Activated CD4-positive, alpha-beta memory T cell treated with anti-CD3 and anti-CD28 coated beads, Interleukin-2, amount 10 ng/mL, durations not matched to agents 7 days and 5 days (primary cell): ENCODE measurements at regions of chr7 and their contacts with region 1.

Region 1: GRCh38 chr7:135662373-135663114 is at the start of gene STMP1:
- DNase-seq: peak; percentile 96
- H3K4me3 Mint-ChIP-seq: peak within 1 kb of the TSS; percentile 85
- H3K27ac Mint-ChIP-seq: peak within 1 kb of the TSS; percentile 69
- H3K4me1 Mint-ChIP-seq: peaks cover 37% of the 10 kb centered on the region
- H3K27me3 Mint-ChIP-seq: no peaks in the 10 kb centered on the region
- total RNA-seq, gene STMP1: 19.7 to 20.5 TPM

Region 2: DNA sequence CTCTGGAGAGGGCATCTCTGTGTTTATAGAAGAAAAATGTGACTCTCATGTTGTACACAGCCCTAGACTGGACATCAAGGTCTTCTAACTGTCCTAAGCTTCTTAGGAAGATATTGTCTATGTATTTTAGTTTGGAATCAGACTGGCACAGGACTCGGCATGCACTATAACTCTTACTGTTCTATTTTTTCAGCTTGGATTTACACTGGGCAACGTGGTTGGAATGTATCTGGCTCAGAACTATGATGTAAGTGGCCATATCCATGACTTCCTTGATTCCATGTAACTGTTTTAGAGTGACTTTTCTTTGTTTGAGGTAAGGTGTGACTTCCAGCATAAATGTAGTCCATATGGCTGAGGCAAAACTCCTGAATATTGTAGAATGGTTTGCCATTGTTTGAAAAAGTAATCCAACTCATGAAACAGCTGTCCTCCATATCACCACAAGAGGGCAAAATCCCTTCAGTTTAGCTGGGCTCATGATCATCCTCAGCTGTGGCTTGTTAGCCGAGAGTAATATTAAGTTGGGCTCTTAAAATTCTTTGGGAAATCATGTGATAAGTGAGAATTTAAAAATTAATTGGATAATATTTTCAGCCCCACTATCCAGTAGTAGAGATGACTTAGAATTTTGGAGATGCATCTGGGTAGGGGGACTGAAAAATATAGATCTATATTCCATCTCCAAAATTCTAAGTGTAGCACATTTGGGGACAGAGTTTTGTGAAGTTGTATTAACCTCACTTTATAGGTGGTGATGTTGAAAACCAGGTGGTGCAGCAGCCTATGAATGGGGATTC is 10.2 kb after region 1 on chr7:
- CTCF ChIA-PET with region 1: interaction called, 16 read pairs
- POLR2A ChIA-PET with region 1: interaction called, 45 read pairs
- DNase-seq: no peak
- H3K4me3 Mint-ChIP-seq: no peak overlapping the region
- H3K27ac Mint-ChIP-seq: no peak overlapping the region
- H3K4me1 Mint-ChIP-seq: peaks cover 3% of the 10 kb centered on the region
- H3K27me3 Mint-ChIP-seq: no peaks in the 10 kb centered on the region

Region 3: DNA sequence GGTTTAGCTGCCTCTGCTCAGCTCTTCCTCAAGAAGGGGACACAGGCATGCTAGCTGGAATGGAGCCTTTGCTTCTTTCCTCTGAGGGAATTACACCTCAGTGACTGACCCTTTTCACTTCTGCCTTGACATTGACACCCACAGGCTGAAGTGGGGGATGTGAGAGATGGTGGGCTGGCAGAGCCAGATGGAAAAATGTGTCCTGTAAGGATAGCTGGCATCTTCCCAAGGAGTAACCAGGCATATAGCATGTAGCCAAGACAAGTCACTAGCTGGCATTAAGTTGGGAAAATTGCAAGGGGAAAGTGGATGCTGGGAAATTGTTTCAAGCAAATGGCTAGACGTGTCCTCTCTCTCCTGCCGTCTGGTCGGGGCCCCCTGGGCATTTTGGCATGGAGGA is 19.6 kb after region 1 on chr7:
- CTCF ChIA-PET with region 1: interaction called, 10 read pairs
- POLR2A ChIA-PET with region 1: interaction called, 45 read pairs
- DNase-seq: no peak
- H3K4me3 Mint-ChIP-seq: no peak overlapping the region
- H3K27ac Mint-ChIP-seq: no peak overlapping the region
- H3K4me1 Mint-ChIP-seq: peaks cover 15% of the 10 kb centered on the region
- H3K27me3 Mint-ChIP-seq: peaks cover 1% of the 10 kb centered on the region

Region 4: GRCh38 chr7:135710417-135711138 is 48.0 kb after region 1 on chr7:
- CTCF ChIA-PET with region 1: interaction called, 10 read pairs
- POLR2A ChIA-PET with region 1: interaction called, 4 read pairs
- DNase-seq: peak; percentile 19
- H3K4me3 Mint-ChIP-seq: no peak overlapping the region
- H3K27ac Mint-ChIP-seq: no peak overlapping the region
- H3K4me1 Mint-ChIP-seq: no peaks in the 10 kb centered on the region
- H3K27me3 Mint-ChIP-seq: no peaks in the 10 kb centered on the region